BJ (cell line): ENCODE measurements at regions of chr17 and their contacts with region 1.

Region 1: DNA sequence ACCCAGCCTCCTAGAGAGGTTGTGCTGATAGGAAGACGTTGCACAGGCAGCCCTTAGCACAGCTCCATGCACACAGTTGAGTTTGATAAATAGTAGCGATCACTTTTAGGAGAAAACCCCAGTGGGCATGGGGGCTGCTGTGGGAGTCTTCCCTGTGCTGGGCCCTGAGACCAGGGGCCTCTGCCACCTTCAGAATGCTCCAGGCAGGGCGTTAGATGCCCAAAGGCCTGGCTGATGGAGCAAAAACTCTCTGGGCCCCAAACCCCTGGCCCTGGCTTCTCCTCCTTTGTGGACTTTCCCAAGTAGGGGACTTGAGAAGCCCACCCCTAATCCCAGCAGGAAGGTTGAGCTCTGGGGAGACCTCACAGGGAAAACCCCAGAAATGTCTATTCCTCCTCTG is 14.3 kb upstream of the SLC4A1 start:
- DNase-seq: no peak
- H3K4me3 ChIP-seq: no peak overlapping the region
- H3K27me3 ChIP-seq: peaks cover 1% of the 10 kb centered on the region; the same call in 1 of the 2 replicates
- CTCF ChIP-seq: no peak

Region 2: GRCh38 chr17:44095642-44096496 is 186.4 kb before region 1 on chr17:
- CTCF ChIA-PET with region 1: no interaction called
- POLR2A ChIA-PET with region 1: interaction called, 11 read pairs
- DNase-seq: peak; percentile 63
- H3K4me3 ChIP-seq: peak overlapping the region; percentile 3; the same call in 1 of the 2 replicates
- H3K27me3 ChIP-seq: no peaks in the 10 kb centered on the region
- CTCF ChIP-seq: peak; percentile 34